Left colon (tissue), 2 donors: ENCODE measurements at regions of chr2 and their contacts with region 1.

Region 1: GRCh38 chr2:98412751-98413458 is 31.8 kb upstream of the INPP4A start:
- DNase-seq: peak in 1 of 2 donors; percentile 36
- ATAC-seq: peak; percentile 95

Region 2: DNA sequence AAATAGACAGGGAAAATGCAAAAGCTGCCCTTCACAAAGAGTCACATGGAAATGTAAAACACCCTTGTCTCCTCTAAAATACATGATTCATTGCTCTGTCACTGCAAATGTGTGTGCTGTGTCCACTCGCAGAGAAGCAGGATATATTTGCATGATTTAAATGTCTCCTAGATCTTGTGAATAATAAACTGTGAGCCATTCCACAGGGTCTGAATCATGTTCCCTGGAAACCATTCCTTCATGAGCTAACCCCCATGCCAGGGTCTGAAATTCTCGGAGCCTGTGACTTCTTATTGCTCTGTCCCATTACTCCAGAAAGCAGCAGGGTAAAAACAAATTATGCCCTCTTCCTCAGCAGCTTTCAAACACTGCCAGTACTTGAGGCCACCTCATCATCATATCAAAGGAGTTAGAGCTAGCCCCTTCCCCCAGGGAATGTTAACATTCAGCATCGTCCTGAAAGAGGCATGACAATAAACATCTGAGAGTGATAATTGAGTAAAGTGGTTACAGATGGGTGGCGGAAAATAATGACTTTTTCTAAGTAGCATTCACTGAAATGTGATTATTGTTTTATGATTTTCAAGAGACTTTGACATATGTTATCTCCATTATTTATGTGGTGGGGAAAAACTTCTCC is 78.3 kb before region 1 on chr2:
- intact Hi-C with region 1: no loop called
- DNase-seq: no peak
- ATAC-seq: no peak

Region 3: DNA sequence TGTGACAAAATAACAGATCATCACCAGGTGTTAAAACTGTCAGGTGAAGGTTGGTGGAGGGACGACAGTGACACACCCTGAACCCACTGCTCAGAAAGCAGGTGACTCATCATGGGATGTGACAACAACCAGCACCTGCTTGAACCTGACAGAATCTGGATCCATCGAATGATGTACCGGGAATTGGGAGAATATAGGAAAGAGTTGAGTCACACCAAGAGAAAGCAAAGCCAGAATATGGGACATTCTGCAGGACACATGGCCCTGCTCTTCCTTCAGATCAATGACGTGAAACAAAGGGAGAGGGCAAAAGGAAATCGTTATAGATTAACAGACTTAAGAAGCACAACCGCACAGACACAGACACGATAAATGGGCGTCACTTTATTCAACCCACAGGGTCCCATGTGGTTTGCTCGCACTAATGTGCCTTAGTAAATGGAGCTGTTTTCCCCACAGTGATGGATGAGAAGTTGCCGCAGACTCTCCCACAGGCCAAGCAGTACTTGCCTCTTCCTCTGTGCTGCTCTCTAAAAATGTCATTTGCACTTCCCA is 423.0 kb after region 1 on chr2:
- intact Hi-C with region 1: loop called in 1 of 2 experiments (anchors 5 kb)
- DNase-seq: no peak
- ATAC-seq: no peak